Activated T-helper 1 cell treated with anti-CD3 and anti-CD28 coated beads, Interleukin-12 subunit alpha, Interleukin-12 subunit beta, Interleukin-2, Interleukin-4 antibody, amounts not matched to agents 30 ng/mL and 10 ng/mL and 1 ng/mL, durations not matched to agents 14 hours and 24 hours and 36 hours (primary cell): ENCODE measurements at regions of chr7 and their contacts with region 1.

Region 1: GRCh38 chr7:36487756-36488336 is 98.2 kb downstream of the ANLN start:
- DNase-seq: peak; percentile 26
- H3K4me3 Mint-ChIP-seq: no peak overlapping the region
- H3K27ac Mint-ChIP-seq: no peak overlapping the region
- H3K4me1 Mint-ChIP-seq: peaks cover 5% of the 10 kb centered on the region
- H3K27me3 Mint-ChIP-seq: peaks cover 4% of the 10 kb centered on the region

Region 2: DNA sequence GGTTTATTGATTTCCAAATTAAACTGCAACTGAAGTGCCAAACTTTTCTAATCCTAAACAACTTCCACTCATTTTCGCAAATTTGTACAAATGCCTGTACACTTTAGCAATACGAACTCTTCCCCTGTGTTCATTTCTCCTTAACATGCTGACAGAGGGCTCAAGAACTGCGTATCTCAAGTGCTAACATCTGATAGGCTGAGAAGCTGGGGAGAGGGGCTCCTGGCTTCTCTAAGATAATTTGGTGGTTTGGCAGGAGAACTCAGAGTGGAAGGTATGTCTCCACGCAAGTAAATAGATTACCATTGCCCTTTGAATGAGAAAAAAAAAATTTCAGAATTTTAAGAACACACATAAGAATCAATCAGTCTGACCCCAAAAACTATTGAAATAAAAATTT is 151.5 kb before region 1 on chr7:
- intact Hi-C with region 1: no loop called
- DNase-seq: no peak
- H3K4me3 Mint-ChIP-seq: no peak overlapping the region
- H3K27ac Mint-ChIP-seq: no peak overlapping the region
- H3K4me1 Mint-ChIP-seq: no peaks in the 10 kb centered on the region
- H3K27me3 Mint-ChIP-seq: peaks cover 12% of the 10 kb centered on the region

Region 3: DNA sequence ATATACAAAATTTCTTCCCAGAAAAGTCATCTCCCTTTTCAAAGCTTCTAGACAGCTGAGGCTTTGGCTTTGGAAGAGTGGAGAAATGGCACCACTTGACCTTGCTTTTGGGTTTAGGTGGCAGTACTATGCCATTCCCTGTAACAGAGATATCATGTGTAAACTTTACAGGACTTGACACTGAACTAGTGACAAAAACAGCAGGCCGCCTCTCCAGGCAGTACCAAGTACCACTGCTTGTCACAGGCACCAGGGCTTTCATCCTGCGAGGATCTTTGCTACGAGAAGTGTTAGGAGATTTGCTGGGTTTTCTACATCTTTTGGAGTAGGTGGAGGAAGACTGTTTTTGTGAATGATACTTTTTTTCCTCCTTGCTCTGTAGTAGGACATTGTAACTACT is 130.8 kb before region 1 on chr7:
- intact Hi-C with region 1: no loop called
- DNase-seq: no peak
- H3K4me3 Mint-ChIP-seq: no peak overlapping the region
- H3K27ac Mint-ChIP-seq: no peak overlapping the region
- H3K4me1 Mint-ChIP-seq: no peaks in the 10 kb centered on the region
- H3K27me3 Mint-ChIP-seq: peaks cover 7% of the 10 kb centered on the region

Region 4: GRCh38 chr7:36473454-36474282 is 14.2 kb before region 1 on chr7:
- intact Hi-C with region 1: no loop called
- DNase-seq: no peak
- H3K4me3 Mint-ChIP-seq: no peak overlapping the region
- H3K27ac Mint-ChIP-seq: no peak overlapping the region
- H3K4me1 Mint-ChIP-seq: peaks cover 19% of the 10 kb centered on the region
- H3K27me3 Mint-ChIP-seq: no peaks in the 10 kb centered on the region

Region 5: DNA sequence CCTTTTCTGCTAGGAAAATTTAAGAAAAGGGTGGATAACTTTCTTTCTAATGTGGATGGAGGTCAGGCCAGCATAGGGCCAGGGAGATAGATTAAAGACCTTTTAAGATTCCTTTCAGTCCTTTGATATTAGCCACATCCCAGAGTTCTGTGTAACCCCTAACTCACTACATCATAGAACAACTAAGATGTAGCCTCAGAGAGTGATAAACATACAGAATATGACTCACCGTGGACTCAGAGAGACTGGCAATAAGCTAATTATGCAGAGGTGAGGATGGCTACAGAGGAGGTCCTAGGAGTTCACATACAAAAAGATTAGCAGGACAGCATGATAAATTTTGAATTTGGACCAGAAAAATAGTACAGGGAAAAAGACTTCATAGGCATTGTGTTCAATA is 95.5 kb after region 1 on chr7:
- intact Hi-C with region 1: no loop called
- DNase-seq: no peak
- H3K4me3 Mint-ChIP-seq: no peak overlapping the region
- H3K27ac Mint-ChIP-seq: no peak overlapping the region
- H3K4me1 Mint-ChIP-seq: peaks cover 12% of the 10 kb centered on the region
- H3K27me3 Mint-ChIP-seq: peaks cover 1% of the 10 kb centered on the region

Region 6: DNA sequence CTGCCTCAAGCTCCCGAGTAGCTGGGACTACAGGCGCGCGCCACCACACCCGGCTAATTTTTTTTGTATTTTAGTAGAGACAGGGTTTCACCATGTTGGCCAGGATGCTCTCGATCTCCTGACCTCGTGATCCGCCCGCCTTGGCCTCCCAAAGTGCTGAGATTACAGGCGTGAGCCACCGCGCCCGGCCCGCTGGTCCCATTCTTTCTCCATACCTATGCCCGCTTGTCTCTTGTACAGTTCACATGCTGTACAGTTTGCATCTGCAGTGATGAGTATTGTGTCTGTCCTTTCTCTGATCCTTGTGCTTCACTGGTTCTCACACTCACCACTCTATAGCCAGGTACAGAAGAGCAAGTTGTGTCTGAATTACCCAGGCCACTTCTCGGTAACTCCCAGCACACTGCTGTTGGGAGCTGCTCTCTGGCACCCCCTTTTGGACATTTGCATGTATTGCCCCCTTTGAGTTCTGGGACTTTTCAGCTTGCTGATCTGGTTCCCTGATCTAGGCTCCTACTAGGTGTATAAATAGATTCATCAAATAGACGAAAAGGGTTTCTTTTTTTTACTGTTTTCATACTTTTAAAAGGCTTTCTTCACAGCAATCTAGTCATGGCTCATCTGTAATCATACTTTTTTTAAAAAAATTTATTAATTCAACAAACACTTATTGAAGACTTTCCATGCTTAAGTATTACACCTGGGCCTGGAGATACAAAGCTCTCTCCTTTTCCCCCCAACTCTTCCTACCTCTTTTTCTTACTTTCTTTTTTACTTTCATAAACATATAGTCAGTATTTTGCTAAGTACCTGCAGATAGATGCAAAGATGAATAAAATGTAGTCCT is 183.0 kb after region 1 on chr7:
- intact Hi-C with region 1: loop called (anchors 1 kb)
- DNase-seq: peak; percentile 54
- H3K4me3 Mint-ChIP-seq: no peak overlapping the region
- H3K27ac Mint-ChIP-seq: no peak overlapping the region
- H3K4me1 Mint-ChIP-seq: peaks cover 55% of the 10 kb centered on the region
- H3K27me3 Mint-ChIP-seq: no peaks in the 10 kb centered on the region

Region 7: GRCh38 chr7:36784991-36785940 is 297.4 kb after region 1 on chr7:
- intact Hi-C with region 1: loop called (anchors 5 kb)
- DNase-seq: peak; percentile 68
- H3K4me3 Mint-ChIP-seq: peak overlapping the region; percentile 72
- H3K27ac Mint-ChIP-seq: peak overlapping the region; percentile 92
- H3K4me1 Mint-ChIP-seq: peaks cover 74% of the 10 kb centered on the region
- H3K27me3 Mint-ChIP-seq: no peaks in the 10 kb centered on the region

Region 8: GRCh38 chr7:36986429-36987362 is 498.9 kb after region 1 on chr7:
- intact Hi-C with region 1: loop called (anchors 5 kb)
- DNase-seq: peak; percentile 40
- H3K4me3 Mint-ChIP-seq: no peak overlapping the region
- H3K27ac Mint-ChIP-seq: no peak overlapping the region
- H3K4me1 Mint-ChIP-seq: peaks cover 36% of the 10 kb centered on the region
- H3K27me3 Mint-ChIP-seq: no peaks in the 10 kb centered on the region

Region 9: DNA sequence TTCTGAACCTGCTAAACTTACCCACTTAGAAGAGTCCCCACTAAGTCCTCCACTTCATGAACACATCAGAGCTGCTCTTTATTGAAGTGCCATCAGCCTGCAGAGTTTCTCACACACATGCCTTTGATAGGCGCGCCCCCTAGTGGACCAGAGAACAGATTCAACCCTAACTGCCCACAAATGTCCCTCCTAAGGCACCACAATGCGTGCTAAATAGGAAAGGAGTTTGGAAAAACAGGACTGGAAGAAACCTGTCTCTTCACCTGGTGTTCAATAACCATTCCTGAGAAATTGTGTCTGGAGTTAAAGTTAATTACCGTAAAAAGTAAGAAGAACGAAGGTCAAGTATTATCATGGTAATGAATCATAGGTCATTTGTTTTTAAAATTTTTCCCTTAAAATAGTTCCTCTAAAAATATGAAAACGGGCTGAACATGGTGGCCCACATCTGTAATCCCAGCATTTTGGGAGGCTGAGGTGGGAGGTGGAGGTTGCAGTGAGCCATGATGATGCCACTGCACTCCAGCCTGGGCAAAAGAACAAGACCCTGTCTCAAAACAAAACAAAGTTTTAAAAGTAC is 711.1 kb after region 1 on chr7:
- intact Hi-C with region 1: loop called (anchors 1 kb)
- DNase-seq: peak; percentile 53
- H3K4me3 Mint-ChIP-seq: no peak overlapping the region
- H3K27ac Mint-ChIP-seq: no peak overlapping the region
- H3K4me1 Mint-ChIP-seq: no peaks in the 10 kb centered on the region
- H3K27me3 Mint-ChIP-seq: no peaks in the 10 kb centered on the region

Region 10: DNA sequence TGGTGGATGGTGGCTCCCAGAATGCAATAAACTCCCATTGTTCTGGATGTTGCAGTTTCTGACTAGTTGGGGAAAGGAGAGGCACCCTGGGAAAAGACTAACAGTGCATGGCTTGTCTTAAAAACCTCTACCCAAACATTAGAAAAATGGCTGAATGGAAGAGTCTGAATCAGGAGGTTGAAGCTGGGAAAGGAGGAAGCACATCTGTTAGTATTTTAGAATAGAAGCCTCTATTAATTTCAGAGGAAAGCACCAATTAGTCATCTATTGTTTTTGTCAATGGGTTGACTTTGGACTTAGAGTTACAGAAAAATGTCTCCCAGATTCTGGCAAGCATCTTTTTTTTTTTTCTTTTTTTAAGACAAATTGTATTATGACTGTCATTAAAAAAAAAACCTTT is 1017.0 kb after region 1 on chr7:
- intact Hi-C with region 1: loop called (anchors 10 kb)
- DNase-seq: no peak
- H3K4me3 Mint-ChIP-seq: no peak overlapping the region
- H3K27ac Mint-ChIP-seq: no peak overlapping the region
- H3K4me1 Mint-ChIP-seq: no peaks in the 10 kb centered on the region
- H3K27me3 Mint-ChIP-seq: peaks cover 22% of the 10 kb centered on the region